Caco-2 (cell line): ENCODE measurements at regions of chr12 and their contacts with region 1.

Region 1: DNA sequence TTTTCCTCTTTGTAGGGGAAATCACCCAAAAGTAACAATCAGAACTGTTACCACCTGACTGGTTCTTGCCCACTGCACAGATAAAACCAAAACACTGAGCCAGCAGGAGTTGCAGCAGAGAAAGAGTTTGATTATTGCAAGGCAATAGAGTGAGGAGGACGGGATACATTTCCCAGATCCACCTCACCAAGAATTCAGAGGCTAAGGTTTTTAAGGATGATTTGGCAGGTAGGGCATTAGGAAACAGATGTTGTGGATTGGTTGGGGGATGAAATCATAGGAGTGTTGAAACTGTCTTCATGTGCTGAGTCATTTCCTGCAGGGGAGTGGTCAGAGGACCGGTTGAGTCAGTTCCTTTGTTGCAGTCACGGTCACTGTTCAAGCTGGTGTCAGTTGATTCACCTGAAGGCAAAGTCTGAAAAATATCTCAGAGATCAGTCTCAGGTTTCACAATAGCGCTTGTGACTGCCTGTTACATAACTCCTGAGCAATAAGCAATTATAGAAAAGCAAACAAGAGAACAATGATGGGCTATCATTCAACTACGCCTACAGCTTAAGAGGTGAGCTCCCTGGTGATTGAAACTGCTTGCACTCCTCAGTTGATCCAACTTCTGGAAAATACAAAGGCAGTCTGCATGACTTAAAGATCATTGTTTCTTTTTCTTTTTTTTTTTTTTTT is 20.3 kb upstream of the AMN1 start:
- DNase-seq: peak; percentile 92 to 95
- H3K4me3 ChIP-seq: no peak overlapping the region
- H3K4me3 Mint-ChIP-seq: peak overlapping the region; percentile 31
- H3K27ac Mint-ChIP-seq: peak overlapping the region; percentile 96
- H3K4me1 ChIP-seq: peaks cover 18% of the 10 kb centered on the region
- H3K4me1 Mint-ChIP-seq: peaks cover 22% of the 10 kb centered on the region
- H3K27me3 ChIP-seq: no peaks in the 10 kb centered on the region
- H3K27me3 Mint-ChIP-seq: no peaks in the 10 kb centered on the region
- CTCF ChIP-seq: no peak

Region 2: DNA sequence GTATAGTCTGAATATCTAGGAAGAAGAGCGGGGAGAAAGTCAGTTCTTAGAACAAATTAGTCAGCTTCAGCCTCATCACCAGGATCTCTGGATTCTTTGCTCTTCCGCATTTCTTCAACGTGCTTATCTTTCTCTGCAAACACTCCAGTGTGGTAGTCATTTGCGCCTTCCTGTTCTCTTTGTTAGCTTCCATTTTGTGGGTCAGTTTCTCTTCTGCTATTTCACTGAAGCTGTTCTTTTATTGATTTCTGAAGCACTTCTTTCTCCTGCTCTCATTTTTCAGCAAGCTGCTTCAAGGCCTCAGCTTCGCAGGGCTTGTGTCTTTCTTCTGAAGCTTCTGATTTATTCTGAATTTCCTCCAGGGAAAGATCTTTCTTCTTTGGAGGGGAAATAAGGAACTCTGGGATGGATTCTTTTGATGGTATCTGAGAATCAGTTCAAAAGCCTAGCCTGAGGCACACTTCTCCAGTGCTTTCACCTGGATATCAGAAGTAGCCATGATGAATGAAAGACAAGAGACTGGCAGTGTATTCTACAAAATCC is 33.8 kb before region 1 on chr12:
- CTCF ChIA-PET with region 1: no interaction called
- POLR2A ChIA-PET with region 1: interaction called, 3 read pairs
- intact Hi-C with region 1: loop called (anchors 1 kb)
- DNase-seq: peak; percentile 71
- H3K4me3 ChIP-seq: no peak overlapping the region
- H3K4me3 Mint-ChIP-seq: peak overlapping the region; percentile 60
- H3K27ac Mint-ChIP-seq: peak overlapping the region; percentile 88
- H3K4me1 ChIP-seq: peaks cover 21% of the 10 kb centered on the region
- H3K4me1 Mint-ChIP-seq: peaks cover 29% of the 10 kb centered on the region
- H3K27me3 ChIP-seq: no peaks in the 10 kb centered on the region
- H3K27me3 Mint-ChIP-seq: no peaks in the 10 kb centered on the region
- CTCF ChIP-seq: no peak

Region 3: DNA sequence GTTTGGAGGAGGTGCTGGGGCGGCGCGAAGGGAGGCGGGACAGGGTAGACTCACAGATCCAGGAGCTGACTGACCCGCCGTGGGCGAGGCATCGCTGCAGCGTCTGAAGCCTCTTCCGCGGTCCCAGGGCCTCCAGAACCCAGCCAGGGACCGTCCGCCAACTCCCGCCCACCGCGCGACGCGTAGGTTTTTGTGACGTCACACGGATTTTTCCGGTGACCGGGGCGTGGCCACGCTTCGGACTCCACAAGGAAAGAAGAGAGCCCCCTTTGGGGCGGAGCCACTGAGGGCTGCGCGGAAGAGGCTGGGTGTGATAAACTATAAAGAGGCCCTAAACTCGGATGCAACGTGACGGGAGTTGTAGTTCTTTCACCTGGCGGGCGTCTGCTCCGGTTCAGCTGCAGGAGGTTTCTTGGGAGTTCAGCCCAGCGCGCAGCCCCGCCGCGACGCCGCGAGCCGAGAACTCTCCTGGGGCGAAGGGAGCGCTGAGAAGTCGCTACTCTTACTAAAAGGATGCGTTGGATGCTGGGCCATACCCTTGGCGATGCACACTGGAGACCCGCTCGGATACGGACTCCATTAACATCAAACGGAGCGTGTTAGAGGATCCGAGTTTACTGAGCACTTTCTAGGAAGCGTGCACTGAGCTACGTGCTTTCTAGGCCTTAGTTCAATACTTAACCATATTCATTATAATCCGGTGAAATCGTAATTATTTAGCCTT is 20.1 kb before region 1 on chr12 and contains the start of gene AMN1:
- CTCF ChIA-PET with region 1: interaction called, 4 read pairs
- POLR2A ChIA-PET with region 1: interaction called, 7 read pairs
- intact Hi-C with region 1: loop called (anchors 1 kb)
- DNase-seq: peak; percentile 100
- H3K4me3 ChIP-seq: peak within 1 kb of the TSS; percentile 78
- H3K4me3 Mint-ChIP-seq: peak within 1 kb of the TSS; percentile 95
- H3K27ac Mint-ChIP-seq: peak within 1 kb of the TSS; percentile 98
- H3K4me1 ChIP-seq: peaks cover 35% of the 10 kb centered on the region
- H3K4me1 Mint-ChIP-seq: peaks cover 21% of the 10 kb centered on the region
- H3K27me3 ChIP-seq: no peaks in the 10 kb centered on the region
- H3K27me3 Mint-ChIP-seq: no peaks in the 10 kb centered on the region
- CTCF ChIP-seq: no peak
- total RNA-seq, gene AMN1: 6.2 and 8.8 TPM in 2 replicates

Region 4: DNA sequence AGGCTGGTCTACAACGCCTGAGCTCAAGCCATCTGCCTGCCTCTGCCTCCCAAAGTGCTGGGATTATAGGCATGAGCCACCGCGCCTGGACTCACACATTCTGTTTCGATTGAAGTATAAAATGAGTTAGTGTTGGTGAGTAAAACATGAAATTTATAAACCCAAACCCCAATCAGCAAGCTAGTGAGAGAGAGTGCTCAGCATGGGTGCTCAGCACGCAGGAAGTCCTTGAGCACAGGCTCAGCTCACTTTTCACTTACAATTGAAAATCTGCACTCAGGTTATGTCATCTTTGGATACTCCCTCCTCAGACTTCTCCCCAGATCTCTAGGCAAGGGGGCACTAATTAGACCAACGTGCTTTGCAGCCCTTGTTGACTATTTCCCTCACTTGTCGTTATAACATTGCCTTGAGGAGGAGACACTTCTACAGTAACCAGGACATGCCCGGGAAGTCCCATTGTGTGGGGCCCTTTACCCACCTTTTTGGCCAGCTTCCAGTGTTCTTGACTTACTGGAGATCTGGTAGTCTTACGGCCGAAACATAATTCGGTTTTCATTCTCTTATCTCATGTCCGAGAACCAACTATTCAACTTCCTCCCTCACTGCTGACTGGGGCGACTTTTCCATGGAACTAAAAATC is 48.2 kb after region 1 on chr12:
- CTCF ChIA-PET with region 1: no interaction called
- POLR2A ChIA-PET with region 1: no interaction called
- intact Hi-C with region 1: no loop called
- DNase-seq: no peak
- H3K4me3 ChIP-seq: no peak overlapping the region
- H3K4me3 Mint-ChIP-seq: no peak overlapping the region
- H3K27ac Mint-ChIP-seq: no peak overlapping the region
- H3K4me1 ChIP-seq: no peaks in the 10 kb centered on the region
- H3K4me1 Mint-ChIP-seq: no peaks in the 10 kb centered on the region
- H3K27me3 ChIP-seq: no peaks in the 10 kb centered on the region
- H3K27me3 Mint-ChIP-seq: no peaks in the 10 kb centered on the region
- CTCF ChIP-seq: no peak

Region 5: DNA sequence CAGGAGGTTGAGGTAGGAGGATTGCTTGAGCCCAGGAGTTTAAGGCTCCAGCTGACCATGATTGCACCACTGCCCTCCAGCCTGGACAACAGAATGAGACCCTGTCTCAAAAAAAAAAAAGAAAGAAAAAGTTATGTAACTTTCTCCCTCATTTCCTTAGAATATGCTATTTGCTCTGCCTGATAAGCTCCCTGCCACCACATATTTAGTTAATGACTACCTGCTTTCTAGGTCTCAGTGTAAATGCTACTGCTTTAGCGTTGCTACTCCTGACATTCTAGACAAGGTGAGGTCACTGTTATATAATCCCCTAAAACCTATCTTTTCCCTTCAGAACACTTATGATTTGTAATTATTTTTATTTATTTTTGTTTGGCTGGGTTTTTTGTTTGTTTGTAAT is 65.9 kb after region 1 on chr12:
- CTCF ChIA-PET with region 1: no interaction called
- POLR2A ChIA-PET with region 1: no interaction called
- intact Hi-C with region 1: loop called (anchors 1 kb)
- DNase-seq: peak; percentile 51 to 58
- H3K4me3 ChIP-seq: no peak overlapping the region
- H3K4me3 Mint-ChIP-seq: no peak overlapping the region
- H3K27ac Mint-ChIP-seq: peak overlapping the region; percentile 28
- H3K4me1 ChIP-seq: peaks cover 24% of the 10 kb centered on the region
- H3K4me1 Mint-ChIP-seq: peaks cover 9% of the 10 kb centered on the region
- H3K27me3 ChIP-seq: no peaks in the 10 kb centered on the region
- H3K27me3 Mint-ChIP-seq: no peaks in the 10 kb centered on the region
- CTCF ChIP-seq: no peak

Region 6: DNA sequence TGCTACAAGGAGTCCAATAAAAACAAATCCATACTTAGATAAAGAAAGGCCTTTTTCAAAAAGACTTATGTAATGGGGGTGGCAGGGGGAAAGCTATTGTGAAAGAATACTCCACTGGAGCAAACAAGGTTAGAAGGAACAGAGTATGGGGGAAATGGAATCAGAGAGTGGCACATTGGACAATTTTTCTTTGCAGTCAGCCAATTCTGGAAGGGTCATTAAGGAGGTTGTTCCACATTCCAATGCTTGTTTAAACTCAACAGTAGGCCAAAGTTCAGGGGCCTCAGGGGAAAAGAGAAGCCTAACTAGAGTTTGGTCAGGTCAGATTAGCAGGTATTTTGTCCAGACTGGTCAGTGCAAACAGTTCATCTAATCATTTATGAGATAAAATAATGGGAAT is 104.8 kb after region 1 on chr12:
- CTCF ChIA-PET with region 1: no interaction called
- POLR2A ChIA-PET with region 1: no interaction called
- intact Hi-C with region 1: loop called (anchors 5 kb)
- DNase-seq: peak; percentile 72 to 79
- H3K4me3 ChIP-seq: no peak overlapping the region
- H3K4me3 Mint-ChIP-seq: peak overlapping the region; percentile 11
- H3K27ac Mint-ChIP-seq: peak overlapping the region; percentile 51
- H3K4me1 ChIP-seq: peaks cover 33% of the 10 kb centered on the region
- H3K4me1 Mint-ChIP-seq: peaks cover 17% of the 10 kb centered on the region
- H3K27me3 ChIP-seq: no peaks in the 10 kb centered on the region
- H3K27me3 Mint-ChIP-seq: no peaks in the 10 kb centered on the region
- CTCF ChIP-seq: no peak

Region 7: DNA sequence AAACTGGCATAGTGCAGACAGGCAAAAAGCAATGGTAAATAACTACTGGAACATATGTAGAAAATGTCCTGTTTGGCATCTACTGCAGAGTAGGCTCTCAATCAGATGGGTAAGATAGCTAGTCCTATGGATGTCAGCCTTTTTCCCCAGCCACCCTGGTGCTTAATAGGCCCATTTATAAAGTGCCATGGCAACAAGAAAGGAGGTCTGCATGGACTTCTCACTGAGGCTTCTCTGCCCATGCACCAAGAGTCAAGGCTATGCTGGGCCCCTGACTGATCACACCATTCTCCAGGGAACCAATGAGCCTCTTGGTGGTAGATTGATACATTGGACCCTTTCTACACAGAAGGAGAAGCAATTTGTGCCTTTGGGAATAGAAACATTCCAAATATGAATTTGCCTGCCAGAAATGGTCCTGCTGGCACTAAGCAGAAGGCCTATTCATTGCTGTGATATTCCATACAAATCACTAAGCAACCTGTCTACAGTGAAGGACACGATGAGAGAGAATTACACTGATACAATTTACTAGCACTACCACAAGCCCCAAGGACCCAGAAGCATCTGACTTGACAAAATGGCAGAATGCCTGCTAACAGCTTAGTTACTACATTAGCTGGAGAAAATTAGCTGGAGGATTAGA is 253.8 kb after region 1 on chr12:
- CTCF ChIA-PET with region 1: interaction called, 10 read pairs
- POLR2A ChIA-PET with region 1: no interaction called
- intact Hi-C with region 1: no loop called
- DNase-seq: no peak
- H3K4me3 ChIP-seq: no peak overlapping the region
- H3K4me3 Mint-ChIP-seq: no peak overlapping the region
- H3K27ac Mint-ChIP-seq: no peak overlapping the region
- H3K4me1 ChIP-seq: no peaks in the 10 kb centered on the region
- H3K4me1 Mint-ChIP-seq: no peaks in the 10 kb centered on the region
- H3K27me3 ChIP-seq: no peaks in the 10 kb centered on the region
- H3K27me3 Mint-ChIP-seq: no peaks in the 10 kb centered on the region
- CTCF ChIP-seq: no peak

Region 8: GRCh38 chr12:32727237-32727636 is 978.1 kb after region 1 on chr12:
- CTCF ChIA-PET with region 1: no interaction called
- POLR2A ChIA-PET with region 1: no interaction called
- intact Hi-C with region 1: no loop called
- DNase-seq: no peak
- H3K4me3 ChIP-seq: no peak overlapping the region
- H3K4me3 Mint-ChIP-seq: no peak overlapping the region
- H3K27ac Mint-ChIP-seq: peak overlapping the region; percentile 21
- H3K4me1 ChIP-seq: no peaks in the 10 kb centered on the region
- H3K4me1 Mint-ChIP-seq: no peaks in the 10 kb centered on the region
- H3K27me3 ChIP-seq: no peaks in the 10 kb centered on the region
- H3K27me3 Mint-ChIP-seq: no peaks in the 10 kb centered on the region
- CTCF ChIP-seq: peak in 1 of 2 experiments; percentile 17